Left colon (tissue), 2 donors: ENCODE measurements at regions of chr2 and their contacts with region 1.

Region 1: DNA sequence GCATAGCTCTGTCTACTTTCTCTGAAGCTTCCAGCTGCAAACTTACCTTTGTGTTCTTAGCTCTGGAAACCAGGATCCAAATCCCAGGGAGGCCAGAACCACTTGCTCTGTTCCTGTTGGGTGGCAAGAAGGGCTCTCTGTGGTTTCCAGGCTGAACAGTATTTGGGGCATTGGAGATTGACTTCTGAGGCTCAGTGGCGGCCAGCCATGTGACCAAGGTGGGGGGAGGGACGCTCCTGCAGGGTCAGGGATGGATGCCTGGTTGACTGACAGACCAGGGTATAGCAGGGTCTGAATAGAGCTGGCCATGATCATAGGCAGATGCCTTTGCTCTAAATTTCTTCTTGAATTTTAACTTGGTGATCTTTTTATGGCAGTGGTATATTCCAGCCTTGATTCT is 15.1 kb downstream of the SLC4A5 start:
- DNase-seq: no peak
- ATAC-seq: no peak

Region 2: DNA sequence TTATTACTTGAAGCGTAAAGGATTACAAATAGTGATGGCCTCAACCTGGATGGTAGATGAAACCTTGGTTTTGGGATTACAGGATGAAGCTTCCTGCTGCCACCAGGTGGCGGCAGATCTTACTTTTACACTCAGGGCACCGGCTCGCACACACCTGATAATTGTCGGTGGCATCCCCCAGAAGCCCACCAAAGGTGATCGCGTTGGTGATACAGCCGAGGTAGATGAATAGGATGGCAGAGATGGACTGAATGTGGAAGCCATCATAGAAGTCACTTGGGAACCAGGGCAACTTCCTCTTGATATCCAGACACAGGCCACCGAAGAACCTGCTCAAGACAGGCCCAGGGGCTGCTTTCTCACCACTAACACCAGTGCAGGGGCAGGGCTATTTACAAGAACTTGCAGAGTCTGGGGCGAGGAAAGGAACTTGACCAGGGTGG is 77.9 kb before region 1 on chr2:
- intact Hi-C with region 1: loop called in 1 of 2 experiments (anchors 10 kb)
- DNase-seq: peak; percentile 30 to 68
- ATAC-seq: peak; percentile 73